ENCODE measurements at regions of chr1 and their contacts with region 1.

Region 1: DNA sequence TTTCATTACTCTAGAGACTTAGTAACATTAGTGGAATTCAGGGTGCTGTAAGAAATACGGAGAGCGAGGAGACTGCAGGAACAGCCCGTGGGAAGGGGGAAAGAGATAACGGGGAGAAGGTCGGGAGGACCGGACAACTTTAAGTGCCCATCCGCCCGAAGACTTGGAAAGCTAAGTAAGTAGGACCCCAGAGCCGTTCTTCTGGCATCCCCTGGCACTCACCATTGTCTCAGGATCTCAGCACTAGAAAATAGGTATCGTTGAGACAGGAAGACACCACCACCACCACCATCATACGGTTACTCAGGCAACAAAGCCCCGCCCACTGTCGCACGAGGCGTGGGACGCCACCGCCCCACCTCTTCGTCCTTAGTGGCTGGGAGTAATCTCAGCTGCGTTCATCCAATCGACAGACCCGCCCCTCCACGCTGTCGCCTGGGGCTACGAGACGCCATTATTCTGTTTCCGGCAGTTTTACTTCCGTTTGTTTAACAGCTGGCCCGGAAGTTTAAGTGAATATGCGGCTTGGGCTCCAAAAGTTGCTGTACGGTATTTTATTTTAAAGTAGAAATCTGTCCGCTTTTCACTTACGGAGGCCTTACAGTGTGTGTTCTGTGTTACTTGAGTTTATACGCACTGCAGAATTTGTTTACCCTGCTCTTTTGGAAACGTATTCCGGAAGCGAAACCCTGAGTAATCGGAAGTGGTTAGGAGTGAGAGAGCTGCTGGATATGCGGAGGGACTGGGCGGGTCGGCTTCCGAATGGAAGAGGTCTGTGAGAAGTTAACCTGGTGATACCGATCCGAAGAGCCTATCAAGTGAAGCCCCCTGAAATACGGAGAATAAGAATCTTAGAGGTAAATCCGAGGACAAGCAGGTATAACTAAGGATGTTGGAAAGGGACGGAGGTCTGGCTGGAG is at the starts of genes BLZF1 and NME7:
- DNase-seq: peak; percentile 99
- H3K4me3 Mint-ChIP-seq: peak within 1 kb of the TSS; percentile 50
- H3K27ac Mint-ChIP-seq: no peak within 1 kb of the TSS
- H3K4me1 Mint-ChIP-seq: peaks cover 30% of the 10 kb centered on the region
- H3K27me3 Mint-ChIP-seq: no peaks in the 10 kb centered on the region
- total RNA-seq, gene BLZF1: 5.6 to 6.0 TPM
- total RNA-seq, gene NME7: 7.1 to 8.5 TPM

Region 2: GRCh38 chr1:168178638-168179437 is 1188.9 kb before region 1 on chr1 and contains the start of gene TIPRL:
- CTCF ChIA-PET with region 1: no interaction called
- intact Hi-C with region 1: loop called (anchors 1 kb)
- DNase-seq: peak; percentile 97
- H3K4me3 Mint-ChIP-seq: no peak within 1 kb of the TSS
- H3K27ac Mint-ChIP-seq: no peak within 1 kb of the TSS
- H3K4me1 Mint-ChIP-seq: peaks cover 7% of the 10 kb centered on the region
- H3K27me3 Mint-ChIP-seq: peaks cover 2% of the 10 kb centered on the region
- total RNA-seq, gene TIPRL: 76.7 to 81.3 TPM

Region 3: DNA sequence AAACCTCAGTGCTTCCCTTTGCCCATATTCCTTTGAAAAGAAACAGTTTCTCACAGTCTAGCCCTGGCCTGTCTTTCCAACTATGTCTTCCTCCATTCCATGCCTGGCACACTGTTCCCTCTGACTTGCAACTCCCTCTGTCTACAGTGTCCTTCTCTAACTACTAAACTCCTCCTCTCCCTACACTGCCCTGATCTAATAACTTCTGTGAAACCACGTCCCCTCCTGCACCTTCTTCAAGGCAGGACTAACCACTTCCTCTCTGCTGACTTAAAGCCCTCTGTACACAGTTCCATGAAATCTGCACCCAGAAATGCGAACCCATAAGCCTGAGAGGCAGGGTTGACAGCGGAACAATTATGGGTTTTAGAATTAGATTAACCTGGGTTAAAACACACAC is 323.4 kb before region 1 on chr1:
- CTCF ChIA-PET with region 1: no interaction called
- intact Hi-C with region 1: loop called (anchors 5 kb)
- DNase-seq: peak; percentile 68
- H3K4me3 Mint-ChIP-seq: no peak overlapping the region
- H3K27ac Mint-ChIP-seq: peak overlapping the region; percentile 66
- H3K4me1 Mint-ChIP-seq: peaks cover 63% of the 10 kb centered on the region
- H3K27me3 Mint-ChIP-seq: no peaks in the 10 kb centered on the region

Region 4: DNA sequence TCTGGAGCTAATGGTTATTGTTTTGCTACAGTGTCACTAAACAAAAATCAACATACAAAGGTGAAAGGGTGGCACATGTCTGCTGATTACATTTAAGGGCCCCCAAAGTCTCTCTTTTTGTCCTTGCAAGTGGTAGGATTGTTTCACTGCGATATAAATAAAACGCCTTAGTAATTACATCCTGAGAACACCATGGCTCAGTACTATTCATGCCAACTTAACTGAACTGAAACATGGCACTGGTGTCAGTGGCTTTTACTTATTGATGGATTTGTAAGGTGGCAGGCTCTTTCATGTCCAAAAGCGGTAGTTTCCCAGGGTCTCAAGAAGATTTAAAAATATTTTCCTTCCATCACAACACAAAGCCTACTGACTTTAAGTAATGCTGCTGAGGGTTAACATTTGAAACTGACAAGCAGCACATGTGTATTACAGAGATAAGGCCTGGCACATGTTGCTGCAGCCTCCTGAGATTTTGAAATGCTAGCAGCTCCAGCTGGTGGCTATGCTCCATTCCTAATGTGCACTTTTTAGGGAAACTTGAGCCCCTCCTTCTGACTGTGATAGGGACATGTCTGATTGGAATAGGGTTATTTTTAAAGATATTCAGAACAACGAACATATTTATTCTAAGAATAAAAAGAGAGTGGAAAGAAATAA is 174.4 kb before region 1 on chr1:
- CTCF ChIA-PET with region 1: no interaction called
- intact Hi-C with region 1: no loop called
- DNase-seq: no peak
- H3K4me3 Mint-ChIP-seq: no peak overlapping the region
- H3K27ac Mint-ChIP-seq: no peak overlapping the region
- H3K4me1 Mint-ChIP-seq: no peaks in the 10 kb centered on the region
- H3K27me3 Mint-ChIP-seq: no peaks in the 10 kb centered on the region

Region 5: DNA sequence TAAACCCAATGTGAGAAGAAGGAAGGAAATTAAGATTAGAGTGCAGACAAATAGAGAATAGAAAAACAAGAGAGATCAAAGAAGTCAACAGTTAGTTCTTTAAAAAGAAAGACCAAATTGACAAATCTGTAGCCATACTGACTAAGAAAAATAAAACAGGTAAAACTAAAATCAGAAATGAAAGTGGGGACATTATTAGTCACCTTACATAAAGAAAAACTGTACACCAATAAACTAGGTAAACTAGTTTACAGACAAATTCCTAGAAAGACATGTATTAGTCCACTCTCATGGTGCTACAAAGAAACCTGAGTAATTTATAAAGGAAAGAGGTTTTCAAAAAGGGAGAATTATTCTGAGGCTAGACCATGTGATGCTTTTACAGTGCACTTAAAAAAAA is 22.6 kb after region 1 on chr1:
- CTCF ChIA-PET with region 1: no interaction called
- intact Hi-C with region 1: loop called (anchors 1 kb)
- DNase-seq: no peak
- H3K4me3 Mint-ChIP-seq: no peak overlapping the region
- H3K27ac Mint-ChIP-seq: no peak overlapping the region
- H3K4me1 Mint-ChIP-seq: peaks cover 4% of the 10 kb centered on the region
- H3K27me3 Mint-ChIP-seq: no peaks in the 10 kb centered on the region

Region 6: DNA sequence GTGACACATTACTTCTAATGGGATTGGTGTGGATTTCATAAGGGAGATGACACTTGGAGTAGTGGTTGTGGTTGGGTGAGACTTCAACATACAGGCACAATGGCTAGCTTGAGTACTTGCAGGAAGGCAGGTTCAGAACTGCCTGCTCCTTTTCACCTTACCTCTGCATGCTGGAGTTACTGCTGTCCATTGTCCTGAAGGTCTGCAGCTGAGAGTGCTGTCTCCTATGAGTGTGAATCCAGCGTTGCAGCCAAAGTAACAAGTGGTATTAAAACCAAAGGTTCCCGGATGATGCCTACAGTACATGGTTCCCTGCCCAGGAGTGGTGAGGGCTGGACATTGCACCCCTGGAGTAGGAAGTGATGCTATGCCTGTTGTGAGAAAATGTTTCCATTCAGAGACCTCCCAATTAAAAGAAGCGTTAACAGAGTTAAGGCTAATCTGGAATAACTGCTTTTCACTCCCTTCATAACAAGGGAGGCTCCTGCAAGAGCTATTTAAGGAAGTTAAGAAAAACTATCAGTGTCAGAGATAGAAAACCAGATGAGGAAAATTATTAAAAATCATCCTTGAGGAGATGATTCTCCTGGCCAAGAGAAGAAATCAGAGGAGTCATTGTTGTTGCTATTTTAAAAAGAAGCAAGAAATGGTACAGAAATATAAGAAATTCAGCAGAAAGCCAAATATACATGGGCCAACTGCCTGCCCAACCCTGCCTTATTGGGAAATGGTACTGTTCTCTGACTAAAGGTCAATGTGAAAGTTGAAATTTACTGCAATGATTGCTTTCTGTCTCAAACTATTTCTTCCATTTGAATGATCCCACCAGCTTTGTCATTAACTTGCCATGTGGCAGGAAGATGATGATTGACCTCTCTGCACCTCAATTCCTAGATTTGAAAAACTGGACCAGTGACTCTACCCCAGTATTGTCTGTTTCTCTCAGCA is 228.3 kb after region 1 on chr1:
- CTCF ChIA-PET with region 1: interaction called, 3 read pairs
- intact Hi-C with region 1: loop called (anchors 2 kb)
- DNase-seq: peak; percentile 70
- H3K4me3 Mint-ChIP-seq: no peak overlapping the region
- H3K27ac Mint-ChIP-seq: no peak overlapping the region
- H3K4me1 Mint-ChIP-seq: peaks cover 63% of the 10 kb centered on the region
- H3K27me3 Mint-ChIP-seq: no peaks in the 10 kb centered on the region

Region 7: DNA sequence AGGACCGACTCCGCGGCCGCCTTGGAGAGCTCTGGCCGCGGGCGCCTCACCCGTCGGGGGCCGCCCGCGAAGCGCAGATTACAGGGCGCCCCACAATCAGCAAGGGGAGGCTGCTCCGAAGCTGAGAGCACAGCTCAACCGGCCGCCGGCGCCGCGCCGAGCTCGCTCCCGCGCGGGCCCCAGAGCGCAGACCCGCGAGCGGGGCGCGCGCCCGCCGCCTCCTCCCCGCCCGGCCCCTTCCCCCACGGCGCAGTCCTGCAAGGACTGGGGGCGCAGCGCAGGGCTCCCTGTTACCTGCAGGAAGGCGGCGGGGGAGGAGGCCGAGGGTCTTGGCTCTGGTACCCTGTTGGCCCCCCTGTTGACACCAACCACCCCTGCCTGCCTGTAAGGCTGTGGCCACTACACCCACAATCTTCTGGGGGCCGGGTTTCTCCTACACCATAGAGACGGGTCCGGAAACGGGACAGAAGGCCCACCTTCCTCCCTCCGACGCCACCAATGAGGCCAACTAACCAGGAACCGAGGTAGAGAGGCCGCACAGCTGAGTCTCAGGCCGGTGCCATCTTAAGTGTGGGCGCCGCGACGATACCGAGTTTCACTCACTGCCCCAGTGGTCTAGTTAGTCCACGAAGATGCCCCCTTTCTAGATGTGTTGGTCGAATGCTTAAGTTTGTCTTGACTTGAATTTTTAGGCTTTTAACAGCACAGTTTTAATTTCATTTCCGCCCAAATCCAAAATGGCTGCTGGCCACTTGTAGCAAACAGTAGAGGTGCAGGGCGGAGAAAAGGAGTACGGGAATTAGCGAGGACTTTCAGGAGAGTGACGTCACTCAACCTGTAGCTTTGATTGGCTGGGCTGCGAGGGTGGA is 526.0 kb after region 1 on chr1 and contains the start of gene SCYL3:
- CTCF ChIA-PET with region 1: interaction called, 3 read pairs
- intact Hi-C with region 1: loop called (anchors 1 kb)
- DNase-seq: peak; percentile 94
- H3K4me3 Mint-ChIP-seq: peak within 1 kb of the TSS; percentile 87
- H3K27ac Mint-ChIP-seq: peak within 1 kb of the TSS; percentile 100
- H3K4me1 Mint-ChIP-seq: peaks cover 34% of the 10 kb centered on the region
- H3K27me3 Mint-ChIP-seq: no peaks in the 10 kb centered on the region
- total RNA-seq, gene SCYL3: 8.8 TPM

Measured in activated naive CD4-positive, alpha-beta T cell treated with anti-CD3 and anti-CD28 coated beads for 36 hours (primary cell).